Left cardiac atrium (tissue), 4 donors: ENCODE measurements at regions of chr11 and their contacts with region 1.

Region 1: GRCh38 chr11:5380740-5381342 is 2.8 kb upstream of the OR51M1 start:
- DNase-seq: peak; percentile 44
- ATAC-seq: peak; percentile 76 to 84

Region 2: DNA sequence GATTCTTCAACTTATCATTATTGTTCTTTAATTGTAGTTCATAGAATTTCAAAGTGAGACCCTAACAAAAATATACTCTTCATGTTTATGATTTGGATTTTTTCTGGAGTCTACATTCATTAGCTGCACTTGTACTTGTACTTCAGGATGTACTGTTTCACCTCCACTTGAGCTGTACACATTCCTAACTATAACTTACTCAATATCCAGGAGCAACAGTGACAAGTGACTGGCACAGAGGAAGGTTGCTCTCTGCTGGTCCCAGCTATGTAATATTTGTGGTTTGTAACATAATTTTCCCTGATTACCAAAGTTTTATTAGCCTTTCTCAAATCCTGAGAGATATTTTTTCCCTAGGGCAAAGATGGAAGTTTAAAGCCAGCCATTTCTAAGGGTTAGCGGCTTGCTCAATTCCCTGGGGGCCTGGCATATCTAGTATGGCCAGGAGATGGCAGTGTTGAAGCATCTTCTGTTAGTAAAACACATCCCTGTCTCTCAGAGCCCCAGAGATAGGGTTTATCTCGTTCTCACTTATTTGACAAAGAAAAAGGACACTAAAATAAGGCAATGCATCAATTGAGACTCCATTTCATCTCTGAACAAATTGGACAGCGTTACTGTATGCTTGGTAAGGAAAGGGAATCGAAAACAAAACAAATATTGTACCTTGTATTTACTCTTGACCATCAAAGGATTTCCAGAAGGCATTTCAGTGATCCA is 256.9 kb before region 1 on chr11:
- intact Hi-C with region 1: loop called (anchors 5 to 10 kb)
- DNase-seq: peak; percentile 44
- ATAC-seq: peak; percentile 68 to 81

Region 3: GRCh38 chr11:5188201-5188600 is 192.6 kb before region 1 on chr11:
- intact Hi-C with region 1: no loop called
- DNase-seq: no peak
- ATAC-seq: no peak

Region 4: DNA sequence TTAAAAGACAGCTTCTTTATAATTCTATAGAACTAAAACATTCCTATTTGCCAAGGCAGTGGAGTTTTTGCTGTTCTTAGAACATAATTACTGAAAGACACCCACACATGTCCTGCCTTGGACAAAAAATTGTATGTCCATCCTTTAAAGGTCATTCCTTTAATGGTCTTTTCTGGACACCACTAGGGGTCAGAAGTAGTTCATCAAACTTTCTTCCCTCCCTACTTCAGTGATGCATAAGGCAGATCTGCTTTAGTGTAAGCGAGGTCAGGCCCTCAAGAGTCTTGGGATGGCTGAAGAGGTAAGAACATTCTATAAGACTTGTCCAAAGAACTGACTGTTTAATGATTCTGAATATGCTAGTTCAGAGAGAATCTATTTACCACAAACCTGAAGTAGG is 176.1 kb before region 1 on chr11:
- intact Hi-C with region 1: loop called in 1 of 2 experiments (anchors 2 kb)
- DNase-seq: no peak
- ATAC-seq: peak; percentile 55 to 58

Region 5: GRCh38 chr11:5277807-5278382 is 102.9 kb before region 1 on chr11:
- intact Hi-C with region 1: no loop called
- DNase-seq: no peak
- ATAC-seq: no peak

Region 6: DNA sequence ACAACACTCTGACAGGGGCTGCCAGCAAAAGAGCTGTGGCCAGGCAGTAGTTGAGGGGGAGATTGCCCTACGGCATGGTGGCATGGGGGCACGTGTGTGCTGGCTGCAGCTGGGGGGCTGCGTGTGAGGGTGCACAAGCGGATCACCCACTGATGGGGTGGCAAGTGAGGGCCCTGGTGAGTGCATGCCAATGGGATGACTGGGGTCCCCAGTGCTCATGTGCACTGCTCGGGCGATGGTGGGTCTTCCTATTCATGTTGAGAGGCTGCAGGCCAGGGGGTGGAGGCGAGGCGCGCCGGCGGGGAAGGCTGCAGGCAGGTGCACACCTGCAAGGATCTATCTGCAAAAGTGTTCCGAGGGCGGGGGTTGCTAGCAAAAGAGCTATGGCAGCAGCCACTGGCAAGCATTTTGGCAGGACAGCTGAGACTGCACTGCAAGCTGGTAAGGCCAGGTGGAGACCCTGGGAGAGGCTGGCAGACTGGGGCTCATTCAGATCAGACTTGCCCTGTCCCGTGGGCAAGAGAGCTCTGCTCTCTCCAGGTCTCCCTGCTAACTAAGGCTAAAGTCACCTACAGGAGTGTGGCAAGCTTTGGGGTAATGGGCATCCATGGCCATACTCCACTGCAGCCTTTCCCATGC is 80.3 kb after region 1 on chr11:
- intact Hi-C with region 1: no loop called
- DNase-seq: no peak
- ATAC-seq: no peak